Colonic mucosa (tissue), 4 donors: ENCODE measurements at regions of chr6 and their contacts with region 1.

Region 1: GRCh38 chr6:41920921-41921711 is at the starts of genes BYSL and MED20:
- DNase-seq: peak; percentile 96
- H3K4me3 ChIP-seq: peak within 1 kb of the TSS; percentile 76
- H3K27ac ChIP-seq: peak within 1 kb of the TSS; percentile 93
- H3K4me1 ChIP-seq: peaks cover 4% of the 10 kb centered on the region
- H3K27me3 ChIP-seq: no peaks in the 10 kb centered on the region
- CTCF ChIP-seq: peak; percentile 99
- total RNA-seq, gene BYSL: 10.4 to 16.4 TPM
- total RNA-seq, gene MED20: 15.0 to 22.9 TPM

Region 2: DNA sequence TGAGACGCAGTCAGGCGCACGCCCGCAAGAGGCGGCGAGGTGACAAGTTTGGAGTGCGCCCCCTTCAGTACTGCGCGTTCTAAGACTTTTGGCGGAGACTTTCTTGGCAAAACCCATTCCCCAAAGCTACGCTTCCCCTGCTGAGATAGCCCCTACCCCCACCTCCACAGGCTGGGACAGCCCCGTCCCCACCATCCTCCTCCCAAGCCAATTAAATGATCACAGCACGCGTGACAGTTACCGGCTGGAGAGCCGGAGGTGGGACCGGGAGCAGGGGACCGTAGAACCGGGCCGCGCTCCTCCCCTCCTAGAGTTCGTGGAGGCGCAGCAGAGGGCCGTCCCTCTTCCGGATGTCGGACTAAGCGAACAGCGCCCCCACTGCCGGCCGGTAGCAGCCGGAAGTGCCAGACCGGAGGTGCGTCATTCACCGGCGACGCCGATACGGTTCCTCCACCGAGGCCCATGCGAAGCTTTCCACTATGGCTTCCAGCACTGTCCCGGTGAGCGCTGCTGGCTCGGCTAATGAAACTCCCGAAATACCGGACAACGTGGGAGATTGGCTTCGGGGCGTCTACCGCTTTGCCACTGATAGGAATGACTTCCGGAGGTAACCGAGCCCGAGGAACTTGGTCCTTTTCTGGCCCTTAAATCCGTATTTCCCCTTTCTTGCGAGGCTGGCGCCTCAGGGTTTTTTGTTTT is 133.7 kb before region 1 on chr6 and contains the start of gene TOMM6:
- intact Hi-C with region 1: loop called (anchors 5 kb)
- DNase-seq: peak; percentile 96
- H3K4me3 ChIP-seq: peak within 1 kb of the TSS; percentile 99
- H3K27ac ChIP-seq: peak within 1 kb of the TSS; percentile 92
- H3K4me1 ChIP-seq: peaks cover 8% of the 10 kb centered on the region
- H3K27me3 ChIP-seq: no peaks in the 10 kb centered on the region
- CTCF ChIP-seq: peak; percentile 83
- total RNA-seq, gene TOMM6: 109 to 200 TPM

Region 3: DNA sequence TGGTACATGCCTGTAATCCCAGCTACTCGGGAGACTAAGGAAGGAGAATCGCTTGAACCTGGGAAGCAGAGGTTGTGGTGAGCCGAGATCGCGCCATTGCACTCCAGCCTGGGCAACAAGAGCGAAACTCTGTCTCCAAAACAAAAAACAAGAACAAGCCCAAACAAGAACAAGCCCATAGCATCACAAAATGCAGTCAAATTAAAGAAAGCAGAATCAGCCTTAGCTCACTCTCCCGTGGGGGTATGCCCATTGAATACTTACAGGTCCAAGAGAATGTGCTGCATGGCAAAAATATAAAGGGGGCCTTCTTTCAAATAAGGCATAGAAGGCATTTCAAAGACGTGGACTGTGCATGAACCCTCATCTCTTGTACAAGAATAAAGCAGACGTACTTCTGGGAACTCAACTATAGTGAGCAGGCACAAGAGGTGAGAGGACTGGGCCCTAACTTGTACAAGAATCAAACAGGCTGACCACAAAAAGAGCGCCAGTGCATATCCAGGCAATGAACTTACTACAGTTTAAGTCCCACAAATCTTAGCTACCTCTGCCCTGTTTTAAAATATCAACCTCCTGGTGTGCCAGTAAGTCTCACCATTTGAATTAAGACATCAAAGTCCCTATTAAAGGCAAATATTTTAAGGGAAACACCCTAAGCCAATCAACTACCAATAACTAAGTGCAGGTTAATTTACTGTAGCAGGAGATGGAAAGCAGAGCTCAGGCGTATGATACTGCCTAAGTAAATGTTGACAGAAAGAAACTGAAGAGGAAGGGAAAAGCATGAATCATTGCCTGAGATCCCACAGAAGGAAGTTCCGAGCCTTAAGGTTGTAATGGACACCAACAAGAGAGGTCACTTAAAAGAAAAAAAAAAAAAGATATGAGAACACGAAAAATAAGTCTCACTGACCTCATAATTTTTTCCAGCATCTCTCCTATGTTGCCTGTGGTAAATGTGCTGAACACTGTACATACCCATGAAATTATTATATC is 96.2 kb before region 1 on chr6:
- intact Hi-C with region 1: no loop called
- DNase-seq: no peak
- H3K4me3 ChIP-seq: no peak overlapping the region
- H3K27ac ChIP-seq: no peak overlapping the region
- H3K4me1 ChIP-seq: no peaks in the 10 kb centered on the region
- H3K27me3 ChIP-seq: no peaks in the 10 kb centered on the region
- CTCF ChIP-seq: no peak

Region 4: DNA sequence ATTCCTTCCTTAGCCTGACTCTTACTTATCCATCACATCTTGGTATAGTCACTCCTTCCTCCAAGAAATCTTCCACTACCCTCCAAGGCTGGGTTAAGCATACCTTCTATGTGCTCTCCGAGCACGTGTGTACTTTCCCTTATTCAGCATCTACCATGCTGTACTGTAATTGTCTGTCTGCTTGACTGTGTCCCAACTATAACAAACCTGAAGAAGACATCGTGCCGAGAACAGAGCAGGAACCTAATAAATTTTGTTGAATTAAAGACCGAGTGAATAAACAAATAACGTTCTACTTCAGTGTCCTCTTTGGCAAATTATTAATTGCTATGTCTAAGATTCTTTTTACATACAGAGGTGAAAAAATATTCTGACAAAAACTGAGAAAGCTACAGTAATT is 61.8 kb before region 1 on chr6:
- intact Hi-C with region 1: no loop called
- DNase-seq: no peak
- H3K4me3 ChIP-seq: no peak overlapping the region
- H3K27ac ChIP-seq: no peak overlapping the region
- H3K4me1 ChIP-seq: no peaks in the 10 kb centered on the region
- H3K27me3 ChIP-seq: no peaks in the 10 kb centered on the region
- CTCF ChIP-seq: no peak

Region 5: GRCh38 chr6:41878246-41878645 is 42.9 kb before region 1 on chr6:
- intact Hi-C with region 1: no loop called
- DNase-seq: no peak
- H3K4me3 ChIP-seq: no peak overlapping the region
- H3K27ac ChIP-seq: no peak overlapping the region
- H3K4me1 ChIP-seq: no peaks in the 10 kb centered on the region
- H3K27me3 ChIP-seq: no peaks in the 10 kb centered on the region
- CTCF ChIP-seq: no peak

Region 6: GRCh38 chr6:41941280-41942066 is 20.4 kb after region 1 on chr6 and contains the start of gene CCND3:
- intact Hi-C with region 1: no loop called
- DNase-seq: peak; percentile 95
- H3K4me3 ChIP-seq: peak within 1 kb of the TSS; percentile 76
- H3K27ac ChIP-seq: peak within 1 kb of the TSS; percentile 90
- H3K4me1 ChIP-seq: peaks cover 23% of the 10 kb centered on the region
- H3K27me3 ChIP-seq: no peaks in the 10 kb centered on the region
- CTCF ChIP-seq: no peak
- total RNA-seq, gene CCND3: 86.2 to 92.3 TPM